Right lobe of liver (tissue), 6 donors: ENCODE measurements at regions of chr1 and their contacts with region 1.

Region 1: DNA sequence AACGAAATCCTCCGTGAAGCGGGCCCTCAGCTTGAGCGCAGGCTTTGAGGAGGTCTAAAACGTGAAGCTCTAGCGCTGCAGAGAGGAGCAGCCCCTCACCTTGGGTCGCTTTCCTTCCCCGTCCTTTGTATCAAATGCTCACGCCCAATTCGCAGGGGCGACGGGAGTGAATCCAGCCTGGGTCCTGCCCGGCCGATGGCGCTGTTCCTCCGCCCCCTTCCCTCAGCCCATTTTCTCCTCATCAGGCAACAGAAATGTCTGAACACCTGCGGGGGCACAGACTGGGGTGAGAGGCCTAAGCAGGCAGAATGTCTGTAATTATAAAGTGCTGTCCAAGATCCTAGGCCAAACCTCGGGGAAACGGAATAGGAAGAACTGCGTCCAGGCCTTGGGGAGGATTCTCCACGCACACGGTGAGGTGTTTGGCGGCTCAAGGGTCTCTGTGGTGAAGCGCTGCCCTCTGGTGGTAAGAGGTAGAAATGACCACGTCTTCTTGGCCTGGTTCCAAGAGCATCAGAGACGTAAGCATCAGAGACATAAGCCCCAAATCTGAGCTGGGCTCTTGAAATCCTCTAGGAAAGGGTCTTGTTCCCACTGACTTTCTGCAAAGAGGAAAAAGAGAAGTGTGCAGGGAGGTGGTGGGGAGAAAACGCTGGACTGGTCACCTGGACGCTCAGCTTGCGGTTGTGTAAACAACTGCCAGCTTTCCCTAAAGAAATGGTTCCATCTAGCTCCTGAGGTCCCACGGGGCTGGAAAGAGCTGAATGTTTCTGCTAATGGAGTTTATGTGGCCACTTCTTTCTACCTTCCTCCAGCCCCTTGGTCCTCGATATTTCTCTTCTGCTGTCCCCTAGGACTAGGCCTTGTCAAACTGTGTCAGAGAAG is 92.1 kb upstream of the CD53 start:
- DNase-seq: peak in 2 of 3 donors; percentile 34 to 55
- ATAC-seq: peak; percentile 67 to 78 (median 74)
- H3K4me3 ChIP-seq: no peak overlapping the region
- H3K27ac ChIP-seq: no peak overlapping the region
- H3K4me1 ChIP-seq: no peaks in the 10 kb centered on the region
- H3K27me3 ChIP-seq: no peaks in the 10 kb centered on the region
- CTCF ChIP-seq: peak; percentile 57 to 71 (median 68)
- POLR2A ChIP-seq: no peak

Region 2: GRCh38 chr1:110554871-110555801 is 225.7 kb before region 1 on chr1:
- intact Hi-C with region 1: loop called in 1 of 2 experiments (anchors 10 kb)
- DNase-seq: peak; percentile 50 to 61 (median 60)
- ATAC-seq: peak; percentile 81 to 96 (median 87)
- H3K4me3 ChIP-seq: peak overlapping the region in 2 of 3 donors; percentile 25 to 35
- H3K27ac ChIP-seq: no peak overlapping the region
- H3K4me1 ChIP-seq: no peaks in the 10 kb centered on the region
- H3K27me3 ChIP-seq: peaks cover 0 to 4% of the 10 kb centered on the region in 2 donors
- CTCF ChIP-seq: peak; percentile 44 to 72 (median 62)
- POLR2A ChIP-seq: no peak

Region 3: DNA sequence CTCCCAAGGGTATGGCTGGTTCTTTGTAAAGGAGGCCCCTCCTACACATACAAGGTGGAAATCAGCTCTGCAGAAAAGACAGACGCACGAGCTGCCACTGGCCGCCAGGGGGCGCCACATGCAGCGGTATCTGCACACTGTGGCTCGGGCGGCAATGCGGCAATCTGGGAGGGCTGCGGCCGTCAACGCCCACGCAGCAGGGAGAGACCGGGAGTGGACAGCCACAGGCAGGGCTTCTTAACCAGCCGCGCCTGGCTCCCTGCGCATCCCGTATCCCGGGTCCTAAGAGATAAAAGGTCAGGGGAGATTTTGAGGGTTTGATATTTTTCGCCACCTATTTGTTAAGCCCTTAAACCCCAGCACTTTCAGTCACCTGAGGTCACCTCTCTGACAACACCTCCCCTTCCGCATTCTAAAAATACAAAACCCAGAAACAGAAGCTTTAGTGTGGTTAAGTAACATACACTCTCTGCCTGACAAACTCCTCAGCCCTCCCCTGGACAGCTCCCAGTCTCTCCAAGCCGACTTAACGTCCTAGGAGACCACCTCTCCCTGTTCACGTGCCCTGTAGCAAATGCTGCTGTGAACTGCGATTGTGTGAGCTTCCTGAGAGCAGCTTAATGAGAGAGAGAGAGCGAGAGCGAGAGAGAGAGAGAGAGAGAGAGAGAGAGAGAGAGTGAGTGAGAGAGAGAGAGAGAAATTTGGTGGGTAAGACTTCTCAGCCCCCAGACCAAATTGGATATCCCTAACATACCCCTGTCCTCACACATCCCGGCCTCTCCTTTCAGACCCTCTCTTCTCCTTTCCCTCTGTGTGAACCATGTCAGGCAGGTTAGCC is 161.2 kb before region 1 on chr1:
- intact Hi-C with region 1: loop called in 1 of 2 experiments (anchors 10 kb)
- DNase-seq: peak; percentile 72 to 84 (median 83)
- ATAC-seq: peak; percentile 85 to 95 (median 89)
- H3K4me3 ChIP-seq: no peak overlapping the region
- H3K27ac ChIP-seq: no peak overlapping the region
- H3K4me1 ChIP-seq: peaks cover 0 to 7% (median 0%) of the 10 kb centered on the region in 4 donors
- H3K27me3 ChIP-seq: peaks cover 0 to 5% of the 10 kb centered on the region in 2 donors
- CTCF ChIP-seq: peak; percentile 83 to 98 (median 95)
- POLR2A ChIP-seq: no peak

Region 4: DNA sequence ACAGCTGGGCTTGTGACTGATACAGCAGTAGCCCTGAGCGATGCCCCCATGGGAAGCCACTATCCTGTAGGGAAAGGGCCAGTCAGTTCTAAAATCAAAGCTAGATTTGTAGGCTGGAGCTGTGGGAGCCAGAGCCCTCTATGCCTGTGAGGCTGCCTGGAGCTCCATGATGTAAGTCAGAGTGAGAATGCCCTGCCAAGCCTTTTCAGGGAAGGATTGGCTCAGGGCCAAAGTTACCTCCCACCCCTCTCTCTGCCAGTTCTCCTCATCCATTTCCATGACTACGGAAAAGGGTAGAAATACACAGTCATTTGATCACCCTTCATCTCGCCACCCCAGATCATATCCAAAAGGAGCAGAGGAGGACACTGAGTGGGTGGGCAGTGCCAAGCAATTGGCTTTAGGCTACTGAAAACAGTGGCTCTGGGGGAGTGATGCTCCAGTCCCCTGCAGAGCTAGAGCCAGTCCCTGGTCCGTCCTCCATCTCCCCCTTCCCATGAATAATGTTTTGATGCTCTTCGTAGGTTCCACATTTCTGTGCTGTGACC is 46.6 kb before region 1 on chr1:
- intact Hi-C with region 1: no loop called
- DNase-seq: no peak
- ATAC-seq: no peak
- H3K4me3 ChIP-seq: no peak overlapping the region
- H3K27ac ChIP-seq: no peak overlapping the region
- H3K4me1 ChIP-seq: no peaks in the 10 kb centered on the region
- H3K27me3 ChIP-seq: no peaks in the 10 kb centered on the region
- CTCF ChIP-seq: no peak
- POLR2A ChIP-seq: no peak

Region 5: GRCh38 chr1:110816930-110817329 is 36.1 kb after region 1 on chr1:
- intact Hi-C with region 1: no loop called
- DNase-seq: no peak
- ATAC-seq: no peak
- H3K4me3 ChIP-seq: no peak overlapping the region
- H3K27ac ChIP-seq: no peak overlapping the region
- H3K4me1 ChIP-seq: no peaks in the 10 kb centered on the region
- H3K27me3 ChIP-seq: no peaks in the 10 kb centered on the region
- CTCF ChIP-seq: no peak
- POLR2A ChIP-seq: no peak

Region 6: DNA sequence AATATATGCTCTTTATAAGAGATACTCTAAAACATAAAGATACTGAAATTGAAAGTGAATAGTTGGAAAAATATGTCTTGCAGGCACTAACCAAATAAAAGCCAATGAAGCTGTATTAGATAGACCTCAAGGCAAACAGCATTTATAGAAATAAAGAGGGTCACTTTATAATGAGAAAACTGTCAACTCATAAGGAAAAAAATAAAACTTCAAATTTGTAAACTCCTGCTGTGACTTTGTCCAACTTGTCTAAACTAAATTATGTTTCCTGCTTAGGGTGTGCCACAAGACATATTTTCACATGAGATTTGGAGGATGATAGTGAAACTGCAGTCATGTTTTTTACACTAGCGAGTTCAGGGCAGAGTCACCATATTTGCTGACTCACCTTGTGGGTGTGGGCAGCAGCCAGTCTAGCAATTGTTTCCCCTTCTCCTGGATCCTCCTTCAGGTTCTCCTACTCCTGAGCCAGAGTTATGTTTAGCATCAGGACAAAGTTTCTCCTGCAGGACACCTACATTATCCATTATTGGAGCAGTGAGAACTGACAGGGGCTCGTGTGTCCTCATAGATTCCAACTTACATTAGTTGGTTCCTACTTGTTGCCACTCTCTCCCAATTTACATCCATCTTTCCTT is 135.9 kb after region 1 on chr1:
- intact Hi-C with region 1: no loop called
- DNase-seq: no peak
- ATAC-seq: no peak
- H3K4me3 ChIP-seq: no peak overlapping the region
- H3K27ac ChIP-seq: no peak overlapping the region
- H3K4me1 ChIP-seq: no peaks in the 10 kb centered on the region
- H3K27me3 ChIP-seq: no peaks in the 10 kb centered on the region
- CTCF ChIP-seq: no peak
- POLR2A ChIP-seq: no peak